Mammary epithelial cell (primary cell): ENCODE measurements at regions of chr5 and their contacts with region 1.

Region 1: GRCh38 chr5:2751592-2752021 is at the start of gene IRX2:
- DNase-seq: peak; percentile 96
- H3K4me3 ChIP-seq: peak within 1 kb of the TSS; percentile 84 to 94 (median 91)
- H3K27ac ChIP-seq: peak within 1 kb of the TSS; percentile 87
- H3K4me1 ChIP-seq: peaks cover 42% of the 10 kb centered on the region
- H3K27me3 ChIP-seq: no peaks in the 10 kb centered on the region
- CTCF ChIP-seq: no peak
- total RNA-seq, gene IRX2: 41.5 to 69.0 TPM

Region 2: GRCh38 chr5:2634008-2634407 is 117.6 kb before region 1 on chr5:
- CTCF ChIA-PET with region 1: no interaction called
- dilution Hi-C with region 1: no loop called
- in situ Hi-C with region 1: no loop called
- intact Hi-C with region 1: no loop called
- DNase-seq: no peak
- H3K4me3 ChIP-seq: no peak overlapping the region
- H3K27ac ChIP-seq: no peak overlapping the region
- H3K4me1 ChIP-seq: no peaks in the 10 kb centered on the region
- H3K27me3 ChIP-seq: no peaks in the 10 kb centered on the region
- CTCF ChIP-seq: no peak

Region 3: GRCh38 chr5:2739360-2740050 is 12.1 kb before region 1 on chr5:
- CTCF ChIA-PET with region 1: no interaction called
- dilution Hi-C with region 1: no loop called
- in situ Hi-C with region 1: no loop called
- intact Hi-C with region 1: loop called (anchors 1 kb)
- DNase-seq: peak; percentile 68
- H3K4me3 ChIP-seq: peak overlapping the region; percentile 58 to 64 (median 64)
- H3K27ac ChIP-seq: peak overlapping the region; percentile 49
- H3K4me1 ChIP-seq: peaks cover 30% of the 10 kb centered on the region
- H3K27me3 ChIP-seq: no peaks in the 10 kb centered on the region
- CTCF ChIP-seq: no peak

Region 4: GRCh38 chr5:2805080-2805479 is 53.5 kb after region 1 on chr5:
- CTCF ChIA-PET with region 1: interaction called, 3 read pairs
- dilution Hi-C with region 1: no loop called
- in situ Hi-C with region 1: no loop called
- intact Hi-C with region 1: loop called (anchors 1 kb)
- DNase-seq: peak; percentile 26
- H3K4me3 ChIP-seq: no peak overlapping the region
- H3K27ac ChIP-seq: no peak overlapping the region
- H3K4me1 ChIP-seq: no peaks in the 10 kb centered on the region
- H3K27me3 ChIP-seq: no peaks in the 10 kb centered on the region
- CTCF ChIP-seq: peak; percentile 27 to 82

Region 5: GRCh38 chr5:3010301-3010952 is 258.8 kb after region 1 on chr5:
- CTCF ChIA-PET with region 1: no interaction called
- dilution Hi-C with region 1: no loop called
- in situ Hi-C with region 1: no loop called
- intact Hi-C with region 1: loop called (anchors 2 kb)
- DNase-seq: peak; percentile 71
- H3K4me3 ChIP-seq: no peak overlapping the region
- H3K27ac ChIP-seq: peak overlapping the region; percentile 51
- H3K4me1 ChIP-seq: peaks cover 17% of the 10 kb centered on the region
- H3K27me3 ChIP-seq: no peaks in the 10 kb centered on the region
- CTCF ChIP-seq: no peak

Region 6: GRCh38 chr5:3619579-3619978 is 868.0 kb after region 1 on chr5:
- CTCF ChIA-PET with region 1: no interaction called
- dilution Hi-C with region 1: no loop called
- in situ Hi-C with region 1: no loop called
- intact Hi-C with region 1: no loop called
- DNase-seq: no peak
- H3K4me3 ChIP-seq: no peak overlapping the region
- H3K27ac ChIP-seq: no peak overlapping the region
- H3K4me1 ChIP-seq: peaks cover 18% of the 10 kb centered on the region
- H3K27me3 ChIP-seq: no peaks in the 10 kb centered on the region
- CTCF ChIP-seq: no peak

Region 7: DNA sequence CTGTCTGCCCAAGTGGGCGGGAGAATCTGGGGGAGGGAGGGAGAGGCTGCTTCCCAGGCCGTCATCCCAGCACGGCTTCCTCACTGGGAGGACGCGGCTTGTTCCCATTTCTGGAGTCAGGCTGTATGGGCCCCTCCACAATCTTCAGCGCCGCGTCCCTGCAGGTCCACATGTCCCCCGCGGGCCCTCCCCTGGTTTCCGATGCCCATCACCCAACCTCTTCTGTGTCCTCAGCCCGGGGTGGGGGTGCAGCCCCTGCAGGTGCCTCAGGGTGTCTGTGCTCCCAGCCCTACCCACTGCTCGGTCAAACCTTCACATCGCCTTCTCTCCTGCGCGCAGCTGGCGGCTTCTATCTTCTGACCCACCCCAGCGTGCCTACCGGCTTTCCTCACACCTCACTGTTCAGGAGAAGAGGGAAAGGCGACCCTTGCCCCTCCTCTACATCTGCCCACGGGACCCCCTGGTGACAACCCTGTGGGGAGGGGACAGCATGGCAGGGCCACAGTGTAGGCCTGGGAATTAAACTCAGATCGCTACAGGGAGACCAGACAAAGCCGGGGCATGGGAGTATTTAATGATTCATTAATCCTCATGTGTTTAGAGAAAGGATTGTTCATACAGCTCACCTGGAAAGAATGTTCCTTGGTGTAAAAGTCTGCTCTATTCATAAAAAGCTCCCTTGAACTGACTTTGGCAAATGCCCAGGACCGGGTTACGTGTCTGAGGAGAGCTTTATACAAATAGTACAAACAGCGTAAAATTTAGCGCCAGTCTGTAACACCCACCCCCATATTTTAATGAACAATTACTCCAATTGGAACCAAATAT is 989.2 kb after region 1 on chr5:
- CTCF ChIA-PET with region 1: no interaction called
- dilution Hi-C with region 1: no loop called
- in situ Hi-C with region 1: no loop called
- intact Hi-C with region 1: loop called (anchors 5 kb)
- DNase-seq: peak; percentile 95
- H3K4me3 ChIP-seq: no peak overlapping the region
- H3K27ac ChIP-seq: peak overlapping the region; percentile 95
- H3K4me1 ChIP-seq: peaks cover 28% of the 10 kb centered on the region
- H3K27me3 ChIP-seq: no peaks in the 10 kb centered on the region
- CTCF ChIP-seq: no peak

Region 8: DNA sequence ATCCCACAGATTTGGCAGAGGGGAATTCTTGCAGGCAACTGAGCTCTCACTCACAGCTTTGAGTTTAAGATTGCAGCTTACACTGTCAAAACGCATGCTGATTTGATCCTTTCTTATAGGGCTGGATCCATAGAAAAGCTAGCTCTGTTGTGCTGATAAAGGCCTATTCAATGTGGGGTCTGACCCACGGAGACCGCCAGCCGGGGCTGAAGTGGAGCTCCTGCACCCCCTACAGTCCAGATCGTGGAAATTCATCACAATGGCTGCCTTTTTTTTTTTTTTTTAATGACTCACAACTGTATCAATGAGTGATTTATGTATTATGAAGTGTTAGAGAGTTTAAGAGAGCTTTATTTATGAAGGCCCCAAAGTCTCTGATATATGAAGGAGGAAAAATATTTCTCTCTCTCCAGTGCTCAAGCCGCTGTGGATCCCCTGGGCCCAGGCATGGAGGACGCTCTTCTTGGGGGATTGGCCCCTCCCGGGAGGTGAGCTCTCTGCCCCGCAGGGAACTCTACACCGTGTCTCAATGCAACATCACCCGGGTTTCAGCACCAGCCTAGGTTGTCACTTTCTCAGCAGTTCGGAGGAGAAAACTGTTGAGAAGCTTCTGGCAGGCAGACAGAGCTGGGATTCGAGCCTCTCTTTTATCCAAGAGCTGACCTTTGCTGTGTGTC is 1544.2 kb after region 1 on chr5:
- CTCF ChIA-PET with region 1: no interaction called
- dilution Hi-C with region 1: no loop called
- in situ Hi-C with region 1: no loop called
- intact Hi-C with region 1: loop called (anchors 5 kb)
- DNase-seq: peak; percentile 35
- H3K4me3 ChIP-seq: no peak overlapping the region
- H3K27ac ChIP-seq: no peak overlapping the region
- H3K4me1 ChIP-seq: peaks cover 2% of the 10 kb centered on the region
- H3K27me3 ChIP-seq: no peaks in the 10 kb centered on the region
- CTCF ChIP-seq: peak; percentile 66 to 81